PC-3 (cell line): ENCODE measurements at regions of chr7 and their contacts with region 1.

Region 1: GRCh38 chr7:5657901-5658300 is 123.6 kb downstream of the RNF216 start:
- DNase-seq: no peak
- ATAC-seq: no peak
- H3K4me3 ChIP-seq: no peak overlapping the region
- H3K27ac ChIP-seq: no peak overlapping the region
- H3K4me1 ChIP-seq: no peaks in the 10 kb centered on the region
- H3K27me3 ChIP-seq: no peaks in the 10 kb centered on the region
- CTCF ChIP-seq: no peak

Region 2: GRCh38 chr7:5625938-5626337 is 32.0 kb before region 1 on chr7:
- CTCF ChIA-PET with region 1: interaction called, 14 read pairs
- POLR2A ChIA-PET with region 1: no interaction called
- intact Hi-C with region 1: no loop called
- DNase-seq: peak; percentile 38
- ATAC-seq: no peak
- H3K4me3 ChIP-seq: no peak overlapping the region
- H3K27ac ChIP-seq: no peak overlapping the region
- H3K4me1 ChIP-seq: peaks cover 11% of the 10 kb centered on the region
- H3K27me3 ChIP-seq: no peaks in the 10 kb centered on the region
- CTCF ChIP-seq: 0 out of 2 replicates have a peak, but pooled peaks have one; percentile 20

Region 3: GRCh38 chr7:5677538-5678294 is 19.8 kb after region 1 on chr7:
- CTCF ChIA-PET with region 1: no interaction called
- POLR2A ChIA-PET with region 1: no interaction called
- intact Hi-C with region 1: no loop called
- DNase-seq: peak; percentile 70
- ATAC-seq: peak; percentile 93
- H3K4me3 ChIP-seq: no peak overlapping the region
- H3K27ac ChIP-seq: no peak overlapping the region
- H3K4me1 ChIP-seq: peaks cover 8% of the 10 kb centered on the region
- H3K27me3 ChIP-seq: no peaks in the 10 kb centered on the region
- CTCF ChIP-seq: peak; percentile 82